ENCODE measurements at regions of chr16 and their contacts with region 1.

Region 1: GRCh38 chr16:75566040-75566810 is at the start of gene GABARAPL2:
- DNase-seq: peak; percentile 76
- H3K4me3 ChIP-seq: peak within 1 kb of the TSS; percentile 73 to 78
- H3K27ac ChIP-seq: peak within 1 kb of the TSS; percentile 79 to 81
- H3K4me1 ChIP-seq: peaks cover 11% of the 10 kb centered on the region
- H3K27me3 ChIP-seq: no peaks in the 10 kb centered on the region
- CTCF ChIP-seq: peak in 1 of 4 experiments; percentile 23
- POLR2A ChIP-seq: peak; percentile 95
- total RNA-seq, gene GABARAPL2: 107 to 169 TPM

Region 2: DNA sequence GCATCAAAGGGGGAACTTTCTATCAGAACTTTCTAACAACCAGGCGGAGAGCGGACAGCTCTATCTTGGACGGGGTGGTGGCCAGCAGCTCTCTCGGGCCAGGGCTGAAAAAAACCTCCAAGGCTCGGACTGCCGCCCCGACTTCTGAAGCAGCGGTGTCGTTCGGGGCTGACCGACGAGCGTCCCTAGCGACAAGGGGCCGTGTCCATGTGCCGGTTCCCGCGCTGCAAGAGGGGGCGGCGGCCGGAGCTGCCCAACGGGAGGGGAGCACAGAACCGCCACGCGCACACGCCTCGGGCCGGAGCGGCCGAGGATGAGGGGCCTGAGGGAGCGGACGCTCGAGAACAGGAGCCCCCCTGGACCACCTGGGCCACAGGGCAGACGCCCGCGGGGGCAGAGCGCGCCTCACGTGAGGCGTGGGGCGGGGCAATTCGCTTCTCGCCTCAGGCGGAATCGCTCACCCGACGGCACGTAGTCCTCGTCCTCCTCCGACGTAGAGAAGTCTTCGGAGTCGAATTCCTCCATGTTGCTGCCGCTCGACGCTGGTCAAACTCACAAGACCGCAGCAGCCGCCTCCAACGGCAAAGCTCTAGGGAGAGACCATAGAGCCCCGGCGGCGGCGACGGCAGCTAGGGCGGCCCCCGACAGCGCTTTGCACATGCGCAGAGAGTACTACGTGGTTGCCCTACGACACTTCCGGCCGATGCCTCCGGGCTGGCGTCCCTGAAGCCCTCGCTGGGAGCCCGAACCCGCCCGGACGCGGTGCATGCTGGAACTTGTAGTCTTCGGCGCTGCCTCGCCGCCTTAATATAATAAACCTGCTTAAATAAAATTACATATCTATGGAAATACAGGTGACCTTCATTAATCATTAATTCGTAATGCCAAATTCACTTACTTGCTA is 133.1 kb before region 1 on chr16 and contains the start of gene CFDP1:
- intact Hi-C with region 1: loop called (anchors 5 kb)
- DNase-seq: peak; percentile 96
- H3K4me3 ChIP-seq: peak within 1 kb of the TSS; percentile 93 to 98
- H3K27ac ChIP-seq: peak within 1 kb of the TSS; percentile 95 to 98
- H3K4me1 ChIP-seq: peaks cover 4% of the 10 kb centered on the region
- H3K27me3 ChIP-seq: no peaks in the 10 kb centered on the region
- CTCF ChIP-seq: peak in 2 of 4 experiments; percentile 26 to 36
- POLR2A ChIP-seq: peak; percentile 80
- total RNA-seq, gene CFDP1: 67.9 to 101 TPM

Region 3: DNA sequence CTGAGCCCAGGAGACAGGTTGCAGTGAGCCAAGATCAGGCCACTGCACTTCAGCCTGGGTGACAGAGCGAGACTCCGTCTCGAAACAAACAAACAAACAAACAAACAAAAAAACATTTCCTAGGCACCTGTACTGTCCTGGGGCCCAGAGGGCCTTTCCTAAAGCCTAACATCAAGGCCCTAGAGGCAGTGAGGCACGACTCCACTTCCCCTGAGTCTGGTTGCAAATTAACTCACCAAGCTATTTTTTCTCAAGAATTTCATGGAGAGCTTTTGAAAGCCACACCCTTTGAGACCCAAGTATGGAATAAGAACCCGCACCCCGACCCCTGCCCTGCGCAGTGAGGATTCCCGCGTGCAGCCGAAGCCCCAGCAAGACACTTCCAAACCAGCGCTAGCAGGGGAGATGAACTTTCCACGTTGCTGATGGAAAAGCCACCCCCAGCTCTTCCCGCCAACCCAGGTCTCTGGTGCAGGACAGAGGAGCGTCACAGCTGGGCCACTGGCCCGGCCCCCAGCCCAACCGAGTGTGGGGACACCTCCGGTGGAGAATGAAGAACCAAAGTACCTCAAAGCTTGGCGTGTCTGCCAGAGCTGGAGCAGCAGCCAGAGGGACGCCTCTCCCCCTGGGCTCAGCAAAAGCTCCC is 31.5 kb before region 1 on chr16:
- intact Hi-C with region 1: no loop called
- DNase-seq: no peak
- H3K4me3 ChIP-seq: no peak overlapping the region
- H3K27ac ChIP-seq: no peak overlapping the region
- H3K4me1 ChIP-seq: no peaks in the 10 kb centered on the region
- H3K27me3 ChIP-seq: no peaks in the 10 kb centered on the region
- CTCF ChIP-seq: no peak
- POLR2A ChIP-seq: no peak

Region 4: DNA sequence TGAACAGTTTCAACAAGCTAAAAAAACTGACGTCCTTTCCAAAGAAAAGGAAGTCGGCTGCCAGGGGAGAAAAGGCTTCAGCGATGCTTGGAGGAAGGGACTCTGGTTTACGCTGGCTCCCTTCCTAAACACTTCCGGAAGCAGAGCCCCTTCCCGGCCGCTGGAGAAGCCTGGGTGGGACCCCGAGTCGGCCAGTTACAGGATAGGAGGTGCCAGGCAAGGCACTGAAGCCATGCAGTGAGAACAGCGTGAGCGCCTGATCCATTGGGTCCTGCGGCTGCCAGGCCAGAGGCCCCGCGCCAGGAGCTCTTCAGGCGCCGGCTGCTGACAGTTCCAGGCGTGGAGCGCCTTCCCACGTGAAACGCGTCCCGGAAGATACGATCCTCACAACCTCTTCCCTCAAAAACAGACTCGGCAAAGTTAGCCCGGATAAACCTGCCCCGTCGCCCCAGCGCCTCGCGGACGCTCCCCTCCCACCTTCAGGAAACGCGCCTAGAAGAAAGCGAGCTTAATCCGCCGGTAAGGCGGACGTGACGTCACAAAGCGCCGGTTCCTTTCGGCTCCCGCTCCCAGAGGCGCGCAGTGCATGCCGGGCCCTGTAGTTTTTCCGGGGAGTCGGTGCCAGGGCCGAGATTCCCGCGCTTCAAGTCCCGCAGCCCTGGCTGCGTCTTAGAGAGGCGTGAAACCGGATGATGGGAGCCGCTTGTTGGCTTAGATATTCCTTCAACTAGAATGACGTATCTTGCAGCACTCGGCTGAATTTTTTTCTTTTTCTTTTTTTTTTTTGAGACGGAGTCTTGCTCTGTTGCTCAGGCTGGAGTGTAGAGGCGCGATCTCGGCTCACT is 56.8 kb after region 1 on chr16 and contains the start of gene ADAT1:
- intact Hi-C with region 1: loop called (anchors 2 kb)
- DNase-seq: peak; percentile 98
- H3K4me3 ChIP-seq: peak within 1 kb of the TSS; percentile 70 to 75
- H3K27ac ChIP-seq: peak within 1 kb of the TSS; percentile 74 to 85
- H3K4me1 ChIP-seq: peaks cover 6% of the 10 kb centered on the region
- H3K27me3 ChIP-seq: no peaks in the 10 kb centered on the region
- CTCF ChIP-seq: peak in 2 of 4 experiments; percentile 18 to 28
- POLR2A ChIP-seq: peak; percentile 89
- total RNA-seq, gene ADAT1: 49.1 to 66.0 TPM

Region 5: DNA sequence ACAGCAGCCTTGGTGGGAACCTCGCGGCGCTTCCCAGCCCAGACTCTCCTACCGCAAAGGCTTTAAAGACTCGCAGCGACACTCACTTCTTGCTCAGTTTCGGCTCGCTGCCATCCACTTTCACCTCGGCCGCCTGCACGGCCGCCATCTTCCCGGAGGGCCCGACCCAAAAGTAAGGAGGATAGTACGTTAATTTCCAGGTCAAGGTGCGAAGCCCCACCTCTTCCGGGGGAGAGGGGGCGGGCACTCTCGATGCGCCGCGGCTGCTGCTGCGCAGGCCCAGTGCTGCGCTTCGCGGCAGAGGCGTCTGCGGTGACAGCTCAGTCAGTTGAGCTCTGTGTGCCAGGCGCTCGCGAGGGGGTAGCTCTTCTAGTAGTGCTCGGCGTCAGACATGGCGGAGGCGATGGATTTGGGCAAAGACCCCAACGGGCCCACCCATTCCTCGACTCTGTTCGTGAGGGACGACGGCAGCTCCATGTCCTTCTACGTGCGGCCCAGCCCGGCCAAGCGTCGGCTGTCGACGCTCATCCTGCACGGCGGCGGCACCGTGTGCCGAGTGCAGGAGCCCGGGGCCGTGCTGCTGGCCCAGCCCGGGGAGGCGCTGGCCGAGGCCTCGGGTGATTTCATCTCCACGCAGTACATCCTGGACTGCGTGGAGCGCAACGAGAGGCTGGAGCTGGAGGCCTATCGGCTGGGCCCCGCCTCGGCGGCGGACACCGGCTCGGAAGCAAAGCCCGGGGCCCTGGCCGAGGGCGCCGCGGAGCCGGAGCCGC is 81.5 kb after region 1 on chr16 and contains the starts of genes KARS1 and TERF2IP:
- intact Hi-C with region 1: loop called (anchors 5 kb)
- DNase-seq: peak; percentile 94
- H3K4me3 ChIP-seq: peak within 1 kb of the TSS; percentile 94 to 97
- H3K27ac ChIP-seq: peak within 1 kb of the TSS; percentile 97 to 99
- H3K4me1 ChIP-seq: peaks cover 13% of the 10 kb centered on the region
- H3K27me3 ChIP-seq: no peaks in the 10 kb centered on the region
- CTCF ChIP-seq: peak in 1 of 4 experiments; percentile 20
- POLR2A ChIP-seq: peak; percentile 98
- total RNA-seq, gene KARS1: 89.4 to 145 TPM
- total RNA-seq, gene TERF2IP: 89.7 to 116 TPM